Psoas muscle (tissue), 8 donors: ENCODE measurements at regions of chr2 and their contacts with region 1.

Region 1: GRCh38 chr2:10688921-10689807 is 611 bp downstream of the NOL10 start:
- DNase-seq: peak; percentile 54 to 73
- ATAC-seq: peak; percentile 62 to 80 (median 64)
- H3K4me3 ChIP-seq: peak overlapping the region; percentile 91
- H3K27ac ChIP-seq: peak overlapping the region; percentile 95
- H3K4me1 ChIP-seq: peaks cover 18% of the 10 kb centered on the region
- H3K27me3 ChIP-seq: no peaks in the 10 kb centered on the region
- CTCF ChIP-seq: no peak

Region 2: GRCh38 chr2:10812362-10813162 is 123.4 kb after region 1 on chr2 and contains the start of gene PDIA6:
- intact Hi-C with region 1: loop called in 1 of 2 experiments (anchors 10 kb)
- DNase-seq: peak; percentile 98 to 99
- ATAC-seq: peak; percentile 98 to 99 (median 99)
- H3K4me3 ChIP-seq: peak within 1 kb of the TSS; percentile 90
- H3K27ac ChIP-seq: peak within 1 kb of the TSS; percentile 95
- H3K4me1 ChIP-seq: peaks cover 18% of the 10 kb centered on the region
- H3K27me3 ChIP-seq: no peaks in the 10 kb centered on the region
- CTCF ChIP-seq: peak; percentile 6
- total RNA-seq, gene PDIA6: 40.1 to 61.7 (median 51.7) TPM